Ovary (tissue), 10 donors: ENCODE measurements at regions of chr2 and their contacts with region 1.

Region 1: GRCh38 chr2:21165350-21165749 is 41.6 kb downstream of the TDRD15 start:
- DNase-seq: no peak
- H3K4me3 ChIP-seq: no peak overlapping the region
- H3K27ac ChIP-seq: no peak overlapping the region
- H3K4me1 ChIP-seq: no peaks in the 10 kb centered on the region
- H3K27me3 ChIP-seq: no peaks in the 10 kb centered on the region
- CTCF ChIP-seq: no peak
- EP300 ChIP-seq: no peak
- POLR2A ChIP-seq: no peak

Region 2: DNA sequence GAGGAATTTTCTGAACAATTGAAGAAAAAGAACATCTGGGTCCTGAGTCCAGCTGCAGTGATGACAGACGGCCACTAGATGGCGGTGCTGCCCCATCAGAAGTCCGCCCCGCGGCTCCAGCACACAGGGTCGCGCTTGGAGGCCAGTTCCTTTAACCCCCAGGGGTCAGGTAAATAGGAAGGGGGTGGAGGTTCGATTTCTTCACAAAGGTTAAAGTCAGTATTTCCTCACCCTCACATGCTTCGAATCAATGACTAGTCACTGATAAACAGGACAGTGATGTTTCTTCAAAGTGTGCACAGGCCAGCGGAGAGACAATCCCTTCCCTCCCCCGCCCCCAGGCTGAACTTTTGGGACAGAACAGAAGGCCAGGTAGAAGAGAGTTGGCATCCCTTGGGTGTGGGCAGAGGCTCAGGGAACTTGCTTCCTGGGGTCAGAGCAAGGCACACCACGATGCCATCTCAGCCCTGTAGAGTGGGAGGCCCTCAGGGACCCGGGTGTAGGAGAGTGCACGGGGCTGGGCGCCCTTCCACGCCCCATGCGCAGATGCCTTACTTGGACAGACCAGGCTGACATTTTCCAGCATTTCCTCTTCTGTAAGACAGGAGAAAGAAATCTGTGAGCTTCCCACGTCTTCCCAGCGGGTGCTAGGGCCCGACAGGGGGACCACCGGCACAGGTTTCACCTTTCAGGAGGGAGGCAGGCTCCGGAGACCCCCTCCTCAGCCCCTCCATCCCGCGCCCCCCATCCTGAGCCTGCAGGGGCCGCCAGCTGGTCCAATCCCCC is 122.2 kb before region 1 on chr2:
- intact Hi-C with region 1: loop called in 1 of 4 experiments (anchors 10 kb)
- DNase-seq: peak; percentile 52 to 84 (median 66)
- H3K4me3 ChIP-seq: no peak overlapping the region
- H3K27ac ChIP-seq: peak overlapping the region in 1 of 2 donors; percentile 8
- H3K4me1 ChIP-seq: peaks cover 9% of the 10 kb centered on the region
- H3K27me3 ChIP-seq: no peaks in the 10 kb centered on the region
- CTCF ChIP-seq: peak; percentile 77 to 96 (median 89)
- EP300 ChIP-seq: no peak
- POLR2A ChIP-seq: no peak